Colonic mucosa (tissue), 4 donors: ENCODE measurements at regions of chr6 and their contacts with region 1.

Region 1: GRCh38 chr6:37169496-37170272 is at the start of gene PIM1:
- DNase-seq: peak; percentile 100
- H3K4me3 ChIP-seq: peak within 1 kb of the TSS; percentile 90
- H3K27ac ChIP-seq: peak within 1 kb of the TSS; percentile 94
- H3K4me1 ChIP-seq: no peaks in the 10 kb centered on the region
- H3K27me3 ChIP-seq: no peaks in the 10 kb centered on the region
- CTCF ChIP-seq: no peak
- total RNA-seq, gene PIM1: 15.6 to 26.2 TPM

Region 2: DNA sequence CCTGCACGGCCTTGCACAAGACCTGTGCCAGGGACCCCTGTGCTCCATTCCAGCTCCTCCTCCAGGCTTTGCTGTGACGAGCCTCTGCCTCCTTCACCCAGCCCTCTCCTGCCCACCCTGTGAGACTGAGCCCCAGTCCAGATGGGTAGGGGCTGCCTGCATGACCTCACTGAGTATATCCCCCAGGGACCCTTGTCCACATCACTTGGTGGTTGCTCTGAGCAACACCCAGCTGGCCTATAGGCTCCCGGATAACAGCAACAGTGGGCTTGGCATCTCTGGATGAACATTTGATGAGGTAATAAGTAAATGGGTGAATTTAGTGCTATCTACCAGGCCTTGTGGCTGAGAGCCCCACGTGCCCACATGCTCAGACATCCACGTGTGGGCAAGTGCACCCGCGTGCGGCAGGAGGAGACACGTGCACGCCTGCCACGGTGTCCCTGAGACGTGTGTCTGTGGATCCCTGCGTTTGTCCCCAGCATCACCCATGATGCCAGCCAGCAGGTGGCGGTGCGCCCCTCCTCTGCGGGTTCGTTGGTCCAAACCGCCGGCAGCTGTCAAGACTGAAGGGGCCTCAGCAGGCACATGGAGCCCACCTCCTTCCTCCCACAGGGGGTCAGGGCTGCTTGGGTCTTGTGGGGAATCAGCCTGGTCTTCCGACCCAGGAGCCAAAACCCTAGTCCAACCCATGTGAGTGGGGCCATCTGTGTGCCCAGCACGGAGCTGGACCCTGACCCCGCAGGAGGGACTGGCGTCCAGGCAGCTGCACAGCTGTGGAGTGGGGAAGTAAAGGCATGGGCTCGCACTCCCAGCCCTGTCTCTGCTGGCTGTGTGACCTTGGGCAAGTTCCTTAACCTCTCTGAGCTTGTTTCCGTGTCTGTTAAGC is 118.3 kb before region 1 on chr6:
- intact Hi-C with region 1: loop called (anchors 2 kb)
- DNase-seq: peak; percentile 94
- H3K4me3 ChIP-seq: no peak overlapping the region
- H3K27ac ChIP-seq: peak overlapping the region; percentile 53
- H3K4me1 ChIP-seq: peaks cover 14% of the 10 kb centered on the region
- H3K27me3 ChIP-seq: no peaks in the 10 kb centered on the region
- CTCF ChIP-seq: peak; percentile 90

Region 3: DNA sequence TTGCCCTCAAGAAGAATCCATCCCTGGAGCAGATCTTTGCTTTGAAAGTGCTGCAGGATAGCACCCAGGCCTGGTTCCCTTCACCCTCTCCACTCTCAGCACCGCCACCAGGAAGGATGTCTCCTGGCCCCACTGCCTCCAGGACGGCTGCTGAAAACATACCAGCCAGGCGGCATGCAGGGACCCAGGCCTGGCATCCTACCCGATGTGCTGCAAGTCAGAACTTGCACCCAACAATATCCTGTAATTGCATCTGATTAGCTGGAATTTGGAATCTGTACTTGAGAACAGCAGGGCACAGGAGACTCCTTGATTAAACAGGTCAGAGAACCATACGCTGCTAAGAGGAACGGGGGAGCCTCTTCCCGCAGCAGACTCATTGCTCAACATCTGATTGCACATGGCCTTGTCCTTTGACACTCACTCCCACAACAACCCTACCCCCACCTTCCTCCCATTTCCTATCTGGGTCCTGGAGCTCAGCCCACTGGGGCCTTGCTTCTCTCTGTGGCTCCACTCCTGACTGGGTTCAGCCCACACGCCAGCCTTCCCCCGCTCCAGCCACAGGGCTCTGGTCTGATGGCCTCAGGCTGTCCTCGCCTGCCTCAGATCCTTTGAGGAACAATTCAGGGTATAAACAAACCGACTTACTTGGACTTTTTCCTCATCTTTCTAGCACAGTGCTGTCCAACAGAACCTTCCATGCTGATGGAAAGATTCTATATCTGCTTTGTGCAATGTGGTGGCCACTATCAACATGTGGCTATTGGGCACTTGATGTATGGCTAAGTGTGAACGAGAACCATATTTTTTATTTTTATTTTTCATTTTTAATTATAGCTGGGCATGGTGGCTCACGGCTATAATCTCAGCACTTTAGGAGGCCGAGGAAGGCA is 86.2 kb before region 1 on chr6:
- intact Hi-C with region 1: no loop called
- DNase-seq: peak; percentile 51
- H3K4me3 ChIP-seq: no peak overlapping the region
- H3K27ac ChIP-seq: peak overlapping the region; percentile 9
- H3K4me1 ChIP-seq: no peaks in the 10 kb centered on the region
- H3K27me3 ChIP-seq: no peaks in the 10 kb centered on the region
- CTCF ChIP-seq: no peak